PC-9 (cell line): ENCODE measurements at regions of chr7 and their contacts with region 1.

Region 1: GRCh38 chr7:120138497-120138896 is 134.5 kb upstream of the KCND2 start:
- DNase-seq: no peak
- H3K4me3 ChIP-seq: no peak overlapping the region
- H3K27ac ChIP-seq: no peak overlapping the region
- H3K4me1 ChIP-seq: no peaks in the 10 kb centered on the region
- H3K27me3 ChIP-seq: no peaks in the 10 kb centered on the region
- CTCF ChIP-seq: no peak

Region 2: DNA sequence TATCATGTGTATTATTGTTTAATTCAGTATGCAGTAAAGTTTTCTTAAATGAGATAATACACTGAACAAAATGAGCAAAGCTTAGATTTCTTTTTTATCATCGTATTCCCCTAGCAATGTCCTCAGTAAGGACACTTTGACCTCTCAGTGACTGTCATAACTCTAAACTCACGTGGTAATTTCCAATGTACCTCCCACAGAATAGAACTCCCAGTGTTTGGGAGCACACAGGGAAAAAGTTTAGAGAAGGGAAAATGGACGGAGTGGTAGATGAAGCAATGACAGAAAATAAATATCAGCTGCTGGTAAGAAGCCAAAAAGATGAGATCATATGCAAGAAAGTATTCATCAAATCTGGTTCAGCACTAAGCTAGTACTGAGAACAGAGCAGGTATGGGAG is 624.2 kb before region 1 on chr7:
- CTCF ChIA-PET with region 1: no interaction called
- POLR2A ChIA-PET with region 1: no interaction called
- intact Hi-C with region 1: no loop called
- DNase-seq: no peak
- H3K4me3 ChIP-seq: no peak overlapping the region
- H3K27ac ChIP-seq: no peak overlapping the region
- H3K4me1 ChIP-seq: no peaks in the 10 kb centered on the region
- H3K27me3 ChIP-seq: no peaks in the 10 kb centered on the region
- CTCF ChIP-seq: no peak

Region 3: GRCh38 chr7:120089968-120090367 is 48.5 kb before region 1 on chr7:
- CTCF ChIA-PET with region 1: no interaction called
- POLR2A ChIA-PET with region 1: no interaction called
- intact Hi-C with region 1: no loop called
- DNase-seq: no peak
- H3K4me3 ChIP-seq: no peak overlapping the region
- H3K27ac ChIP-seq: no peak overlapping the region
- H3K4me1 ChIP-seq: no peaks in the 10 kb centered on the region
- H3K27me3 ChIP-seq: no peaks in the 10 kb centered on the region
- CTCF ChIP-seq: no peak

Region 4: DNA sequence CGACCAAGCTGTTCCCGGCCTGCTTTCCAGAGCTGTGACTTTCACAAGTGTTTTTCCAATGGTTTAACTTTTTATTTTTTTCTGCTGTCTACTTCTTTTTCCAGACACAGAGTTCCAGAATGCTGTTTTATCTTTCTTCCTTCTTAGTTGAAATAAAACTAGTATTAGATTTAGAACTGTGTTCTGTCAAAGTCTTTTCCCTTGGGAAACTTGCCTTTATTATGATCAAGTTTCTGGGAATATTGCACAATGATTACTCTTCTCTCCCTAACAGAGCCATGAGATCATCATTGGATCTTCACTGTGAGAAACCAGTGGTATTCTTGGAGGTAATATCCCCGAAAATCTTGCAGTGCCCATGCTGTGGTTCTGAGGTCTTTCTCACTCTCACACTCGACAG is 29.6 kb after region 1 on chr7:
- CTCF ChIA-PET with region 1: no interaction called
- POLR2A ChIA-PET with region 1: interaction called, 13 read pairs
- intact Hi-C with region 1: no loop called
- DNase-seq: no peak
- H3K4me3 ChIP-seq: no peak overlapping the region
- H3K27ac ChIP-seq: no peak overlapping the region
- H3K4me1 ChIP-seq: peaks cover 26% of the 10 kb centered on the region
- H3K27me3 ChIP-seq: no peaks in the 10 kb centered on the region
- CTCF ChIP-seq: no peak

Region 5: GRCh38 chr7:120395526-120396019 is 257.1 kb after region 1 on chr7:
- CTCF ChIA-PET with region 1: no interaction called
- POLR2A ChIA-PET with region 1: no interaction called
- intact Hi-C with region 1: no loop called
- DNase-seq: no peak
- H3K4me3 ChIP-seq: no peak overlapping the region
- H3K27ac ChIP-seq: no peak overlapping the region
- H3K4me1 ChIP-seq: no peaks in the 10 kb centered on the region
- H3K27me3 ChIP-seq: no peaks in the 10 kb centered on the region
- CTCF ChIP-seq: no peak